Caco-2 (cell line): ENCODE measurements at regions of chr6 and their contacts with region 1.

Region 1: GRCh38 chr6:127641905-127642304 is 64.9 kb downstream of the C6orf58 start:
- DNase-seq: peak; percentile 30 to 36
- H3K4me3 ChIP-seq: no peak overlapping the region
- H3K4me3 Mint-ChIP-seq: no peak overlapping the region
- H3K27ac Mint-ChIP-seq: no peak overlapping the region
- H3K4me1 ChIP-seq: no peaks in the 10 kb centered on the region
- H3K4me1 Mint-ChIP-seq: no peaks in the 10 kb centered on the region
- H3K27me3 ChIP-seq: no peaks in the 10 kb centered on the region
- H3K27me3 Mint-ChIP-seq: no peaks in the 10 kb centered on the region
- CTCF ChIP-seq: peak; percentile 54 to 76

Region 2: GRCh38 chr6:127192911-127193541 is 448.9 kb before region 1 on chr6:
- CTCF ChIA-PET with region 1: no interaction called
- POLR2A ChIA-PET with region 1: no interaction called
- intact Hi-C with region 1: no loop called
- DNase-seq: no peak
- H3K4me3 ChIP-seq: no peak overlapping the region
- H3K4me3 Mint-ChIP-seq: no peak overlapping the region
- H3K27ac Mint-ChIP-seq: no peak overlapping the region
- H3K4me1 ChIP-seq: no peaks in the 10 kb centered on the region
- H3K4me1 Mint-ChIP-seq: peaks cover 6% of the 10 kb centered on the region
- H3K27me3 ChIP-seq: no peaks in the 10 kb centered on the region; the same call in 1 of the 2 replicates
- H3K27me3 Mint-ChIP-seq: peaks cover 4% of the 10 kb centered on the region
- CTCF ChIP-seq: no peak

Region 3: GRCh38 chr6:127328043-127328609 is 313.8 kb before region 1 on chr6:
- CTCF ChIA-PET with region 1: no interaction called
- POLR2A ChIA-PET with region 1: no interaction called
- intact Hi-C with region 1: no loop called
- DNase-seq: no peak
- H3K4me3 ChIP-seq: no peak overlapping the region
- H3K4me3 Mint-ChIP-seq: no peak overlapping the region
- H3K27ac Mint-ChIP-seq: no peak overlapping the region
- H3K4me1 ChIP-seq: peaks cover 13% of the 10 kb centered on the region
- H3K4me1 Mint-ChIP-seq: peaks cover 16% of the 10 kb centered on the region
- H3K27me3 ChIP-seq: no peaks in the 10 kb centered on the region
- H3K27me3 Mint-ChIP-seq: no peaks in the 10 kb centered on the region
- CTCF ChIP-seq: no peak

Region 4: DNA sequence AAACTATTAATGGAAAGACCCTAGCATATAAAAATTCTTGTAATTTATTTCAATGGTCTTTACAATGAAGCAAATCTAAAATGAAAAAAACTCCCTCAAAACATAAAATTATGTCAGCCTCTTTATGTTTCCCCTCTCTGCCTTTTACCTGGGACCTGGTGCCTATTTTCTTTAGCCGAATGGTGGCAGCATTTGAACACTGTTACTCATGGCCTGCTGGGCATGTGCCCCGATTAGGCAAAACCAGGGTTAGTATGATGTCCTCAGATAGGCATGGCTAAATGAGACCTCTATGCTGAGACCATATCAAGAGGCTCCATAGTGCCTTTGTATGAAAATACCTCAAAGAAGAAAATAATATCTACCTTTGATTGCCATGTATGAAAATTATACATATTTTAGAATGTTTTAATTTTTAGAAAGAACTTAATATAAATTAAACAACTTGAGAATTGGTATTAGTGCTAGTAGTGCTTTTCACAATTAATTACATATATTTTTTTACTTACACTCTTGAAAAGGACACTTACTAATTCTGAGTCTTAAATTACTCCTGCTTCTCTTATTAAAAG is 87.4 kb before region 1 on chr6:
- CTCF ChIA-PET with region 1: interaction called, 3 read pairs
- POLR2A ChIA-PET with region 1: no interaction called
- intact Hi-C with region 1: loop called (anchors 1 kb)
- DNase-seq: peak in 1 of 2 experiments; percentile 24
- H3K4me3 ChIP-seq: no peak overlapping the region
- H3K4me3 Mint-ChIP-seq: no peak overlapping the region
- H3K27ac Mint-ChIP-seq: no peak overlapping the region
- H3K4me1 ChIP-seq: no peaks in the 10 kb centered on the region
- H3K4me1 Mint-ChIP-seq: no peaks in the 10 kb centered on the region
- H3K27me3 ChIP-seq: no peaks in the 10 kb centered on the region
- H3K27me3 Mint-ChIP-seq: peaks cover 4% of the 10 kb centered on the region
- CTCF ChIP-seq: peak; percentile 22 to 44

Region 5: GRCh38 chr6:127606131-127606562 is 35.8 kb before region 1 on chr6:
- CTCF ChIA-PET with region 1: interaction called, 6 read pairs
- POLR2A ChIA-PET with region 1: no interaction called
- intact Hi-C with region 1: loop called (anchors 1 kb)
- DNase-seq: peak in 1 of 2 experiments; percentile 29
- H3K4me3 ChIP-seq: no peak overlapping the region
- H3K4me3 Mint-ChIP-seq: no peak overlapping the region
- H3K27ac Mint-ChIP-seq: no peak overlapping the region
- H3K4me1 ChIP-seq: no peaks in the 10 kb centered on the region
- H3K4me1 Mint-ChIP-seq: no peaks in the 10 kb centered on the region
- H3K27me3 ChIP-seq: no peaks in the 10 kb centered on the region
- H3K27me3 Mint-ChIP-seq: peaks cover 8% of the 10 kb centered on the region
- CTCF ChIP-seq: peak; percentile 27 to 31

Region 6: GRCh38 chr6:127618729-127619128 is 23.2 kb before region 1 on chr6:
- CTCF ChIA-PET with region 1: no interaction called
- POLR2A ChIA-PET with region 1: no interaction called
- intact Hi-C with region 1: no loop called
- DNase-seq: no peak
- H3K4me3 ChIP-seq: no peak overlapping the region
- H3K4me3 Mint-ChIP-seq: no peak overlapping the region
- H3K27ac Mint-ChIP-seq: no peak overlapping the region
- H3K4me1 ChIP-seq: no peaks in the 10 kb centered on the region
- H3K4me1 Mint-ChIP-seq: no peaks in the 10 kb centered on the region
- H3K27me3 ChIP-seq: no peaks in the 10 kb centered on the region
- H3K27me3 Mint-ChIP-seq: no peaks in the 10 kb centered on the region
- CTCF ChIP-seq: no peak